Heart right ventricle (tissue), 16 donors: ENCODE measurements at regions of chr2 and their contacts with region 1.

Region 1: GRCh38 chr2:149606251-149606811 is 18.8 kb upstream of the MMADHC start:
- DNase-seq: no peak
- ATAC-seq: no peak
- H3K4me3 ChIP-seq: no peak overlapping the region
- H3K27ac ChIP-seq: no peak overlapping the region
- H3K4me1 ChIP-seq: no peaks in the 10 kb centered on the region
- H3K27me3 ChIP-seq: no peaks in the 10 kb centered on the region
- CTCF ChIP-seq: no peak

Region 2: DNA sequence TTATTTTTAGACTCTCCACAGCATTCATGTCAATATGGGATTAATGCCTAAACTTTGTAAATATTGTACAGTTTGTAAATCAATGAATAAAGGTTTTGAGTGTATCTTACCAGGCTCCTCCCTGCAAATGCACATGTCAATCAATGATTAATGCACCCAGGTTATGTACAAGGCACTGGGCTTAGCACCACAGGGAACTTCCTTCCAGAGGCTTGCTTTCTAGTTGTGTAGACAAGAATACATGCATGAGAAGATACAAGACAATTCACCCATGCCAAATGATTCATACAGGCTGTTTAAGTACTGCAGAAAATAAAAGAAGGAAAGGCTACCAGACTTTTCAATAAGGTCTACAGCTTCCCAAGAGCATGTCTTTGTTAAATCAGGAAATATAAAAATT is 132.8 kb before region 1 on chr2:
- intact Hi-C with region 1: no loop called
- DNase-seq: no peak
- ATAC-seq: no peak
- H3K4me3 ChIP-seq: no peak overlapping the region
- H3K27ac ChIP-seq: no peak overlapping the region
- H3K4me1 ChIP-seq: no peaks in the 10 kb centered on the region
- H3K27me3 ChIP-seq: no peaks in the 10 kb centered on the region
- CTCF ChIP-seq: no peak

Region 3: DNA sequence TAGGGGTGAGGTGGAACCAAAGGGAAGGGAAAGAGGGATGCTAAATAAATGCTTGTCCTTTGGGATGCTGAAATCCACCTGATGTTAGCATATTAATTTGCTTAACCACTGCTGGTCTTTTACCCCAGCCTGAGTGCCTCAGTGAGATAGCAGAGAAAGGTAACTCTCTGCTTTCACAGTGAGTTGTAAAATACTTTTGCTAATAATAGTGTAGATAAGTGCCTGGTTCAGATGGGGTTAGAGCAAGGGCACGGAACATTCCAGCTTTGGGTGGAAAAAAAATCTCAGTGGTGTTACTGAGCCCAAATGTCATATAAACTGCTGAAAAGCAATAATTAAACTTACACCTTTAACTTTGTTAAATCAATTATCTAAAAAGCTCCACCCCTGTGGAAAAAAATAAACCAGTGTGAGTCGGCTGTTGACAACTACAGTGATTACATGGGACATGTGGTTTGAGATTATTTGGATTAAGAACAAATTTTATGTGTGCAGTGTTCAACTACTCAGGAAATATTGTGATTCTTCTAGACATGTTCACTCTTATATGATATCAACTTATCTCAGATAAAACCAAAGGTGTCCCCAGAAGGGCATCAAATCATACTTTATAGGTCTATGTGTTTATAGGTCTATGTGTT is 902.3 kb after region 1 on chr2:
- intact Hi-C with region 1: loop called in 1 of 10 experiments (anchors 5 kb)
- DNase-seq: no peak
- ATAC-seq: peak in 5 of 8 donors; percentile 49 to 86 (median 78)
- H3K4me3 ChIP-seq: no peak overlapping the region
- H3K27ac ChIP-seq: peak overlapping the region in 1 of 10 donors; percentile 14
- H3K4me1 ChIP-seq: peaks cover 0 to 14% (median 0%) of the 10 kb centered on the region in 9 donors
- H3K27me3 ChIP-seq: no peaks in the 10 kb centered on the region
- CTCF ChIP-seq: no peak